ENCODE measurements at regions of chr11 and their contacts with region 1.

Region 1: GRCh38 chr11:128831174-128832120 is 35.6 kb downstream of the KCNJ1 start:
- DNase-seq: peak; percentile 89
- H3K4me3 Mint-ChIP-seq: no peak overlapping the region
- H3K27ac Mint-ChIP-seq: peak overlapping the region; percentile 29
- H3K4me1 Mint-ChIP-seq: peaks cover 28% of the 10 kb centered on the region
- H3K27me3 Mint-ChIP-seq: no peaks in the 10 kb centered on the region

Region 2: DNA sequence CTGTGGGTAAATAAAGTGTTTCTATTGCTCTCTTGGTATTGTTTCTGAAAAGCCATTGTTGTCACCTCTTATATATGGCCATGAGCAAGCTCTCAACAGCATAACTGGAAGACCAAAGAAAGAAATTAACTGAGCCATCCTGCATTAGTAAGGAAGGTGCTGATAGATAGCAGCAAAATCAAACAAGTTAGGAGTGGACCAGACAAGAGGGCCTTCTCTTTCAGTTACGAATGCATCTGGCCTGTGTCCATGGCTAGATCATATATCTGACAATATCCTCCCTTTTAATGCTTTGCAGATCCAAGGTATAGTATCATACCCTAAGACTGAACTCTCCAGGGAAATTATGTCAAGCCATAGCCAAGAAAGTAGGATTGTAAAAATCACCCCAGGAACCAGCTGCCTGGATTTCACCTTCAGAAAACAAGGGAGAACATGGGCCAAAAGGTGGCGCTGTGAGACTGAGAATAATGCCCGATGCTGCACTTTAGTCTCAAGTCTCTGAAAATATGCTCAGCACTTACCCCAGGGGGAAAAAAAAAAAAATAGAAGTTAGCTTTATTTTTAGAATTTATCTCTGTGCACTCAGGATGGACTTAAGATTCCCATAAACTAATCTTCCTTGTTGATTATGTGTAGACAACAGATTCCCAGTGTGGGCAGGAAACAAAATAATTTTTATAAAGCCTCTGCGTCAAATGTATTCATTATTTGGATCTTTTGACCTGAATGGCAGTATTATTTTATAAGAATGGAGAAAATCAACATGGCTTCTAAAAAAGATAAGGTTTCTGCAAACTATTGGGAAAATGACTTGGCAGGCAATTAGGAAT is 659.2 kb before region 1 on chr11:
- CTCF ChIA-PET with region 1: interaction called, 61 read pairs
- POLR2A ChIA-PET with region 1: interaction called, 11 read pairs
- DNase-seq: peak; percentile 87
- H3K4me3 Mint-ChIP-seq: no peak overlapping the region
- H3K27ac Mint-ChIP-seq: no peak overlapping the region
- H3K4me1 Mint-ChIP-seq: peaks cover 13% of the 10 kb centered on the region
- H3K27me3 Mint-ChIP-seq: peaks cover 7% of the 10 kb centered on the region

Region 3: DNA sequence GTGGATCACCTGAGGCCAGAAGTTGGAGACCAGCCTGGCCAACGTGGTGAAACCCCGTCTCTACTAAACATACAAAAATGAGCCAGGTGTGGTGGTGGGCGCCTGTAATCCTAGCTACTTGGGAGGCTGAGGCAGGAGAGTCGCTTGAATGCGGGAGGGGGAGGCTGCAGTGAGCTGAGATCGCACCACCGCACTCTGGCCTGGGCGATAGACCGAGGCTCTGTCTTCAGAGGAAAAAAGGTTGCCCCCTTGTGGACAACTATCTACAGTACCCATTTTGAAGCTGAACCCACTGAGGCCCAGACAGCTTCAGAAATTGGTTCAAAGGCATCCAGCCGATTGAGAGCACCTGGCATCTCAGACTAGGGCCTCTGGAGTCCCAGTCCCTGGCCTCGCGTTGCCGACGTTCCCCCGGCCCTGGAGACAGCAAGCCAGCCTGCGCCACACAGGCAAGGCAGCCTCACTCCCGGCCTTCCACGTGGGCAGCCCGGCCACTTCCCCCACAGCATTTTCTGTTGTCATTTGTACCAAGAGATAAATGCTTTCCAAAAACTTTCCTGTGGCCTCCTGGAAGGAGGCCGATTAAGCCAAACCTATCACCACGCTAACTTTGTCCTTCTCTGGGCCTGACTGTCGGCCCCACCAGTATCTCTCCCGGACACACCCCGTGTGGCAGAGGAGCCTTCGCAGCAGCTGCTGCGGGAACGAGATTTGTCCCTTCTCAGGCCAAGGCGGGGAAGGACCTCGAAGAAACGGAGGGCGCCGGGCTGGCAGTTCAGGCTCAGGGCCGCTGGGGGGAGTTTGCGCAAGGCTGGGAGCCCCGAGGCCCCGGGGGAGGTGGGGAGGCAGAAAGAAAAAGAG is 54.8 kb before region 1 on chr11:
- CTCF ChIA-PET with region 1: interaction called, 18 read pairs
- POLR2A ChIA-PET with region 1: interaction called, 3 read pairs
- DNase-seq: peak; percentile 32
- H3K4me3 Mint-ChIP-seq: no peak overlapping the region
- H3K27ac Mint-ChIP-seq: peak overlapping the region; percentile 30
- H3K4me1 Mint-ChIP-seq: peaks cover 54% of the 10 kb centered on the region
- H3K27me3 Mint-ChIP-seq: no peaks in the 10 kb centered on the region

Region 4: GRCh38 chr11:128848815-128849455 is 17.5 kb after region 1 on chr11:
- CTCF ChIA-PET with region 1: interaction called, 51 read pairs
- POLR2A ChIA-PET with region 1: interaction called, 8 read pairs
- DNase-seq: peak; percentile 69
- H3K4me3 Mint-ChIP-seq: no peak overlapping the region
- H3K27ac Mint-ChIP-seq: no peak overlapping the region
- H3K4me1 Mint-ChIP-seq: peaks cover 28% of the 10 kb centered on the region
- H3K27me3 Mint-ChIP-seq: no peaks in the 10 kb centered on the region

Region 5: GRCh38 chr11:128867277-128867676 is 35.8 kb after region 1 on chr11 and contains the start of gene KCNJ1:
- CTCF ChIA-PET with region 1: interaction called, 10 read pairs
- POLR2A ChIA-PET with region 1: interaction called, 5 read pairs
- DNase-seq: peak; percentile 48
- H3K4me3 Mint-ChIP-seq: no peak within 1 kb of the TSS
- H3K27ac Mint-ChIP-seq: no peak within 1 kb of the TSS
- H3K4me1 Mint-ChIP-seq: no peaks in the 10 kb centered on the region
- H3K27me3 Mint-ChIP-seq: peaks cover 14% of the 10 kb centered on the region
- total RNA-seq, gene KCNJ1: not detected